ENCODE measurements at regions of chr2 and their contacts with region 1.

Region 1: DNA sequence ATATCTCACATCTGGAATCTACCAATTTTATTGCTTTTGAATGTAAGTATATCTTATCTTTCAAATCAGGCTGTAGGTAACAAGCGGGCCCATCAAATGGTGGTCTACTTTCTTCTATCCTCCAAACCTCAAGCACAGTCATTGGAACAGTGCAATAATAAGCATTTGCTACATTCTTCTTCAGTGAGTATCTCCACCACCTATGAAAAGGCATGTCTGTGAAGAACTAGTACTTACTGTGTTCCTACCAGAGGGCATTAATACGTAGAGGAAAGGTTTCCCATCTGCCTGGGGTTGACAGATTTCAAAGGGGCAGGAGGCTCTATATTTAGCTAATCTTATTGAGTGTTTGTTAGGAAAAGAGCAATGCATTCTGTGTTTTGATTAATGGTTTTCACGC is 411.1 kb downstream of the NCKAP5 start:
- DNase-seq: no peak
- ATAC-seq: no peak
- H3K4me3 ChIP-seq: no peak overlapping the region
- H3K27ac ChIP-seq: no peak overlapping the region
- H3K4me1 ChIP-seq: no peaks in the 10 kb centered on the region
- H3K27me3 ChIP-seq: no peaks in the 10 kb centered on the region
- CTCF ChIP-seq: no peak

Region 2: GRCh38 chr2:132503701-132504100 is 653.4 kb before region 1 on chr2:
- CTCF ChIA-PET with region 1: no interaction called
- POLR2A ChIA-PET with region 1: interaction called, 13 read pairs
- intact Hi-C with region 1: no loop called
- DNase-seq: peak; percentile 39
- ATAC-seq: peak; percentile 35
- H3K4me3 ChIP-seq: no peak overlapping the region
- H3K27ac ChIP-seq: no peak overlapping the region
- H3K4me1 ChIP-seq: peaks cover 5% of the 10 kb centered on the region; the same call in 1 of the 2 replicates
- H3K27me3 ChIP-seq: no peaks in the 10 kb centered on the region
- CTCF ChIP-seq: no peak

Region 3: GRCh38 chr2:132849118-132849517 is 308.0 kb before region 1 on chr2:
- CTCF ChIA-PET with region 1: no interaction called
- POLR2A ChIA-PET with region 1: no interaction called
- intact Hi-C with region 1: no loop called
- DNase-seq: peak; percentile 20
- ATAC-seq: no peak
- H3K4me3 ChIP-seq: no peak overlapping the region
- H3K27ac ChIP-seq: no peak overlapping the region
- H3K4me1 ChIP-seq: peaks cover 6% of the 10 kb centered on the region; the same call in 1 of the 2 replicates
- H3K27me3 ChIP-seq: no peaks in the 10 kb centered on the region
- CTCF ChIP-seq: no peak